Activated T-helper 1 cell treated with anti-CD3 and anti-CD28 coated beads, Interleukin-12 subunit alpha, Interleukin-12 subunit beta, Interleukin-2, Interleukin-4 antibody, amounts not matched to agents 30 ng/mL and 10 ng/mL and 1 ng/mL, durations not matched to agents 14 hours and 24 hours and 36 hours (primary cell): ENCODE measurements at regions of chr7 and their contacts with region 1.

Region 1: DNA sequence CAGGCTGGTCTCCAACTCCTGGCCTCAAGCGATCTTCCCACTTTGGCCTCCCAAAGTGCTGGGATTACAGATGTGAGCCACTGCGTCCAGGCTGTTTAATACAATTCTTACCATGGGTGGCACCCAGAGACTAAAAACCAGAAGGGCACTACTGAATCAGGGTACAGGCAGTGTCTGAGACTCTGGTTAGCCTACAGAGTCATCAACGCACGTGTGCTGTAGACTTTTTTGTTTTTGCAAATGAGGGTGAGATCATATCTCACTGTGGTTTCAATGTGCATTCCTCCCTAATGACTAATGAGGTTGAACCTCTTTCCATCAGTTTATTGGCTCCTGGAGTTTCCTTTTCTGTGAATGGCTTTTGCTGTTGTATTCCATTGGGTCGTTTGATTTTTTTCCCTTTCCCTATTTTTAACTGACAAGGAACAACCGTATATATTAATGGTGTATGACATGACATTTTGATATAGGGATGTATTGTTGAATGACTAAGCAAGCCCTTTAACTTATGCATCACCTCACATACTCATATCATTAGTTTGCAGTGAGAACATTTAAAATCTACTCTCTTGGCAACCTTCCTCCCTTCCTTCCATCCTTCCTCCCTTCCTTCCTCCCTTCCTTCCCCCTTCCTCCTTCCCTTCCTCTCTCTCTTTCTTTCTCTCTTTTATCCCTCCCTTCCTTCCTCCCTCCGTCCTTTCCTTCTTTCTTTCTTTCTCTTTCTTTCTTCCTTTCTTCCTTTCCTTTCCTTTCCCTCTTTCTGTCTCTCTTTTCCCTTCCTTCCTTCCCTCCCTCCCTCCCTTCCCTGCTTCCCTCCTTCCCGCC is 9.3 kb upstream of the METTL27 start:
- DNase-seq: no peak
- H3K4me3 Mint-ChIP-seq: no peak overlapping the region
- H3K27ac Mint-ChIP-seq: peak overlapping the region; percentile 15
- H3K4me1 Mint-ChIP-seq: peaks cover 26% of the 10 kb centered on the region
- H3K27me3 Mint-ChIP-seq: peaks cover 12% of the 10 kb centered on the region

Region 2: GRCh38 chr7:73606801-73607691 is 244.6 kb before region 1 on chr7:
- intact Hi-C with region 1: loop called (anchors 10 kb)
- DNase-seq: peak; percentile 42
- H3K4me3 Mint-ChIP-seq: no peak overlapping the region
- H3K27ac Mint-ChIP-seq: no peak overlapping the region
- H3K4me1 Mint-ChIP-seq: no peaks in the 10 kb centered on the region
- H3K27me3 Mint-ChIP-seq: peaks cover 17% of the 10 kb centered on the region

Region 3: DNA sequence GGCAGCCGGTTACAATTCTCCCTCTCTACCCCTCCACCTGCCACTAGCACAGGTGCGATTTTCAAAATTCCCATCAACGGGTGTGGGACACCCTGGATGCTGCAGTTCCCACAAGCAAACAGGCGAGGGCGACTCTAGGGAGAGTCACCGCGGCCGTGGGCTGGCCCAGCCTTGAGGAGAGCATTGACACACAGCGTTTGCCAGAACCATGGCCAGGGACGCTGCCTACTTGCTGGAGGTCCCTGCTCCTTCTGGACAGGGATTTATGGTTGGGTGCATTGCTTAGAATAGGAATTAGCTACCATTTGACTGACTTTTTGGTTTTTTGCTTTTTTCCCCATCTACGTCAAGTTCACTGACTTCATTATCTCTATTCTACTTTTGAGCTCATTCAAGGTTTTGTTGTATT is 39.9 kb before region 1 on chr7:
- intact Hi-C with region 1: loop called (anchors 1 kb)
- DNase-seq: peak; percentile 34
- H3K4me3 Mint-ChIP-seq: no peak overlapping the region
- H3K27ac Mint-ChIP-seq: no peak overlapping the region
- H3K4me1 Mint-ChIP-seq: no peaks in the 10 kb centered on the region
- H3K27me3 Mint-ChIP-seq: peaks cover 4% of the 10 kb centered on the region